Posterior vena cava (tissue), 2 donors: ENCODE measurements at regions of chr1 and their contacts with region 1.

Region 1: GRCh38 chr1:54107131-54107530 is 45.7 kb downstream of the CDCP2 start:
- DNase-seq: no peak

Region 2: DNA sequence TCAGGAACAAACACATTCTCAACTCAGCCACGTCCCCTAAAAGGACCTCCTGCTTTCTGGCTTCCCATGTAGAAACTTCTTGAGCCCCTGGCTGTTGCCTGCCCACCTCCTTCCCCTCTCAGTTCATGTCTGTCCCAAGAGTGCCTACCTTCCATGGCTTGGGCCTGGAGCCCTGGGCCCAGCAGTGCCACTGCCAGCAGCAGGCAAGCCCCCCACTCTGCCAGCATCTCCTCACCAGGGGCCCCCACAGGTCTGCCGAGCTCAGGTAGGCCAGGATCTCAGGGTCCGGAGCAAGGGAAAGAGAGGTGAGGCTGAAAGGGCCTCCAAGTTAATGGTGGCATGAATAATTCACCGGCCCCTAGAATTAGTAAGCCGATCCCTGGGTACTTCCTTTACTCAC is 45.6 kb after region 1 on chr1 and contains the start of gene CDCP2:
- intact Hi-C with region 1: loop called in 1 of 2 experiments (anchors 1 kb)
- DNase-seq: no peak
- total RNA-seq, gene CDCP2: 0.51 to 0.86 TPM

Region 3: DNA sequence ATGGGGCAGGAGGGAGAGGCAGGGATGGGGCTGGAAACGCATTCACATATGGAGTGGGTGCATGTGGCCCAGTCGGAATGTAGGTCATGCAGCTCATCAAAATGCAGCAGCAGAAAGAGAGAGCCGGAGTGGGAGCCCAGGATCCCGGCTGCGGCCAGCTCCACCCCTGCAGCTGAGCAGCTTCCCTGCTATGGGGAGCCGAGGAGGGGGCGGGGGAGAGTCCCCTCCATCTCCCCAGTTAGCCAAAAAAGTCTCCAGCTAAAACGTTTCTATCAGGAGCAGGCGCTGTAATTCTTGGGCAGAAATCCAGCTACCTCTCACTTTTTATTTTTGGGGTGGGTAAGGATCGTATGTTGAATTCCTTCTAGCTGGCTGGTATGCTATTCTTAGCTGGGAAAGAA is 132.5 kb after region 1 on chr1:
- intact Hi-C with region 1: no loop called
- DNase-seq: no peak